Activated T-helper 2 cell treated with anti-CD3 and anti-CD28 coated beads, Interferon-gamma antibody, Interleukin-2, Interleukin-4, amounts not matched to agents 10 μg/mL and 5 μg/mL and 100 μg/mL, durations not matched to agents 14 hours and 24 hours and 36 hours (primary cell): ENCODE measurements at regions of chr6 and their contacts with region 1.

Region 1: GRCh38 chr6:89080542-89081422 is at the start of gene PNRC1:
- DNase-seq: peak; percentile 100
- H3K4me3 Mint-ChIP-seq: peak within 1 kb of the TSS; percentile 92
- H3K27ac Mint-ChIP-seq: peak within 1 kb of the TSS; percentile 95
- H3K4me1 Mint-ChIP-seq: peaks cover 24% of the 10 kb centered on the region
- H3K27me3 Mint-ChIP-seq: no peaks in the 10 kb centered on the region
- total RNA-seq, gene PNRC1: 60.7 and 66.0 TPM in 2 replicates

Region 2: GRCh38 chr6:88963139-88964090 is 117.4 kb before region 1 on chr6 and contains the start of gene RNGTT:
- intact Hi-C with region 1: loop called (anchors 1 kb)
- DNase-seq: peak; percentile 95
- H3K4me3 Mint-ChIP-seq: peak within 1 kb of the TSS; percentile 97
- H3K27ac Mint-ChIP-seq: peak within 1 kb of the TSS; percentile 83
- H3K4me1 Mint-ChIP-seq: peaks cover 30% of the 10 kb centered on the region
- H3K27me3 Mint-ChIP-seq: peaks cover 2% of the 10 kb centered on the region
- total RNA-seq, gene RNGTT: 23.5 and 24.2 TPM in 2 replicates

Region 3: GRCh38 chr6:89050155-89050554 is 30.6 kb before region 1 on chr6:
- intact Hi-C with region 1: no loop called
- DNase-seq: no peak
- H3K4me3 Mint-ChIP-seq: no peak overlapping the region
- H3K27ac Mint-ChIP-seq: no peak overlapping the region
- H3K4me1 Mint-ChIP-seq: peaks cover 8% of the 10 kb centered on the region
- H3K27me3 Mint-ChIP-seq: peaks cover 3% of the 10 kb centered on the region

Region 4: GRCh38 chr6:89098461-89098860 is 17.7 kb after region 1 on chr6:
- intact Hi-C with region 1: loop called (anchors 1 kb)
- DNase-seq: no peak
- H3K4me3 Mint-ChIP-seq: no peak overlapping the region
- H3K27ac Mint-ChIP-seq: no peak overlapping the region
- H3K4me1 Mint-ChIP-seq: peaks cover 7% of the 10 kb centered on the region
- H3K27me3 Mint-ChIP-seq: no peaks in the 10 kb centered on the region

Region 5: DNA sequence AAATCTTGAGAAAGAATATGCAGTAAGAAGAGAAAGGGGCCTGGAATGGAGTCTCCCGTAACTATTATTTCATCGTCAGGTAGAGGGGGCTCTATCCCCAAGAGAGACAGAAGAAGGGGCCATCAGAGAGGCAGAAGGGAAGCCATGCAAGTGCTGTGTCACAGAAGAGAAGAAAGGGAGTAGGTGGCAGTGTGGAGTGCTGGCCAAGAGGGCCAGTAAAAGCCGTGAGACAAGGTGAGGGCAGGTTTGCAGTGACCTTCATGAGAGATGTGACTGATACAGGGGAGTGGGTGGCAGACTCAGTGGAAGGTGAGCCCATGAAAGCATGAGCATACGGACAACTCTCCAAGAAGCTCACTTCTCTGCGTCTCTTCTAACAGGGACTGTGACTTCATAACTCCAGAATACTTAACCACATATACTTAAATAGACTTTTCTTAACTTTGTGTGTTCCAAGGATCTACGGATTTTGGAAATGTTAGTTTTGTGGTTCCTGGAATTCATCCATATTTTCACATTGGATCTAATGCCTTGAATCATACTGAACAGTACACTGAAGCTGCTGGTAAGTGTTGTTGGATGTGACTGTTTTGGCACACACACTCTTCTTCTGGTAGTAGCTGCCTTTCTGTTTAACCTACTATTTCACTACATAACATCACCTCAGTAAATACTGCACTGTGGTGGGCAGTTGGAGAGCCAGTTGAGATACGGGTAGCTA is 80.7 kb after region 1 on chr6:
- intact Hi-C with region 1: no loop called
- DNase-seq: no peak
- H3K4me3 Mint-ChIP-seq: no peak overlapping the region
- H3K27ac Mint-ChIP-seq: no peak overlapping the region
- H3K4me1 Mint-ChIP-seq: no peaks in the 10 kb centered on the region
- H3K27me3 Mint-ChIP-seq: no peaks in the 10 kb centered on the region

Region 6: GRCh38 chr6:89352278-89353117 is 271.7 kb after region 1 on chr6 and contains the start of gene UBE2J1:
- intact Hi-C with region 1: loop called (anchors 1 kb)
- DNase-seq: peak; percentile 74
- H3K4me3 Mint-ChIP-seq: peak within 1 kb of the TSS; percentile 96
- H3K27ac Mint-ChIP-seq: peak within 1 kb of the TSS; percentile 92
- H3K4me1 Mint-ChIP-seq: peaks cover 66% of the 10 kb centered on the region
- H3K27me3 Mint-ChIP-seq: no peaks in the 10 kb centered on the region
- total RNA-seq, gene UBE2J1: 34.4 and 34.8 TPM in 2 replicates

Region 7: GRCh38 chr6:90586836-90587638 is 1506.3 kb after region 1 on chr6 and contains the start of gene MAP3K7:
- intact Hi-C with region 1: loop called (anchors 5 kb)
- DNase-seq: peak; percentile 93
- H3K4me3 Mint-ChIP-seq: peak within 1 kb of the TSS; percentile 94
- H3K27ac Mint-ChIP-seq: peak within 1 kb of the TSS; percentile 95
- H3K4me1 Mint-ChIP-seq: peaks cover 42% of the 10 kb centered on the region
- H3K27me3 Mint-ChIP-seq: peaks cover 20% of the 10 kb centered on the region
- total RNA-seq, gene MAP3K7: 30.5 and 32.1 TPM in 2 replicates